ENCODE measurements at regions of chr5 and their contacts with region 1.

Region 1: GRCh38 chr5:54310433-54311175 is at the start of gene ARL15:
- DNase-seq: peak; percentile 96
- ATAC-seq: peak; percentile 96
- H3K4me3 ChIP-seq: peak within 1 kb of the TSS; percentile 73 to 100 (median 88)
- H3K4me3 Mint-ChIP-seq: peak within 1 kb of the TSS; percentile 96
- H3K27ac ChIP-seq: peak within 1 kb of the TSS; percentile 49 to 80
- H3K27ac Mint-ChIP-seq: peak within 1 kb of the TSS; percentile 90
- H3K4me1 ChIP-seq: peaks cover 8 to 20% of the 10 kb centered on the region in 2 donors
- H3K4me1 Mint-ChIP-seq: peaks cover 24% of the 10 kb centered on the region
- H3K27me3 ChIP-seq: peaks cover 0 to 6% (median 3%) of the 10 kb centered on the region in 4 experiments
- H3K27me3 Mint-ChIP-seq: peaks cover 12% of the 10 kb centered on the region
- CTCF ChIP-seq: no peak
- total RNA-seq, gene ARL15: 20.5 and 25.4 TPM in 2 replicates

Region 2: GRCh38 chr5:53560506-53561191 is 750.0 kb before region 1 on chr5 and contains the start of gene NDUFS4:
- CTCF ChIA-PET with region 1: interaction called, 3 read pairs
- POLR2A ChIA-PET with region 1: no interaction called
- intact Hi-C with region 1: loop called (anchors 5 kb)
- DNase-seq: peak; percentile 83
- ATAC-seq: peak; percentile 93
- H3K4me3 ChIP-seq: peak within 1 kb of the TSS; percentile 83 to 93 (median 90)
- H3K4me3 Mint-ChIP-seq: peak within 1 kb of the TSS; percentile 99
- H3K27ac ChIP-seq: peak within 1 kb of the TSS; percentile 71 to 80
- H3K27ac Mint-ChIP-seq: peak within 1 kb of the TSS; percentile 96
- H3K4me1 ChIP-seq: peaks cover 10 to 20% of the 10 kb centered on the region in 2 donors
- H3K4me1 Mint-ChIP-seq: peaks cover 39% of the 10 kb centered on the region
- H3K27me3 ChIP-seq: peaks cover 0 to 10% (median 2%) of the 10 kb centered on the region in 4 experiments
- H3K27me3 Mint-ChIP-seq: peaks cover 28% of the 10 kb centered on the region
- CTCF ChIP-seq: no peak
- total RNA-seq, gene NDUFS4: 23.7 and 24.0 TPM in 2 replicates

Region 3: GRCh38 chr5:53965459-53965858 is 345.1 kb before region 1 on chr5:
- CTCF ChIA-PET with region 1: no interaction called
- POLR2A ChIA-PET with region 1: no interaction called
- intact Hi-C with region 1: no loop called
- DNase-seq: no peak
- ATAC-seq: no peak
- H3K4me3 ChIP-seq: no peak overlapping the region
- H3K4me3 Mint-ChIP-seq: no peak overlapping the region
- H3K27ac ChIP-seq: no peak overlapping the region
- H3K27ac Mint-ChIP-seq: no peak overlapping the region
- H3K4me1 ChIP-seq: no peaks in the 10 kb centered on the region
- H3K4me1 Mint-ChIP-seq: no peaks in the 10 kb centered on the region
- H3K27me3 ChIP-seq: no peaks in the 10 kb centered on the region
- H3K27me3 Mint-ChIP-seq: no peaks in the 10 kb centered on the region
- CTCF ChIP-seq: no peak

Region 4: GRCh38 chr5:54517174-54518092 is 206.8 kb after region 1 on chr5 and contains the start of gene SNX18:
- CTCF ChIA-PET with region 1: interaction called, 4 read pairs
- POLR2A ChIA-PET with region 1: no interaction called
- intact Hi-C with region 1: loop called (anchors 1 kb)
- DNase-seq: peak; percentile 94
- ATAC-seq: peak; percentile 85
- H3K4me3 ChIP-seq: peak within 1 kb of the TSS; percentile 69 to 97 (median 92)
- H3K4me3 Mint-ChIP-seq: peak within 1 kb of the TSS; percentile 92
- H3K27ac ChIP-seq: peak within 1 kb of the TSS; percentile 9 to 70
- H3K27ac Mint-ChIP-seq: peak within 1 kb of the TSS; percentile 84
- H3K4me1 ChIP-seq: peaks cover 30 to 47% of the 10 kb centered on the region in 2 donors
- H3K4me1 Mint-ChIP-seq: peaks cover 45% of the 10 kb centered on the region
- H3K27me3 ChIP-seq: no peaks in the 10 kb centered on the region
- H3K27me3 Mint-ChIP-seq: no peaks in the 10 kb centered on the region
- CTCF ChIP-seq: peak; percentile 90
- total RNA-seq, gene SNX18: 31.6 and 34.2 TPM in 2 replicates

Region 5: DNA sequence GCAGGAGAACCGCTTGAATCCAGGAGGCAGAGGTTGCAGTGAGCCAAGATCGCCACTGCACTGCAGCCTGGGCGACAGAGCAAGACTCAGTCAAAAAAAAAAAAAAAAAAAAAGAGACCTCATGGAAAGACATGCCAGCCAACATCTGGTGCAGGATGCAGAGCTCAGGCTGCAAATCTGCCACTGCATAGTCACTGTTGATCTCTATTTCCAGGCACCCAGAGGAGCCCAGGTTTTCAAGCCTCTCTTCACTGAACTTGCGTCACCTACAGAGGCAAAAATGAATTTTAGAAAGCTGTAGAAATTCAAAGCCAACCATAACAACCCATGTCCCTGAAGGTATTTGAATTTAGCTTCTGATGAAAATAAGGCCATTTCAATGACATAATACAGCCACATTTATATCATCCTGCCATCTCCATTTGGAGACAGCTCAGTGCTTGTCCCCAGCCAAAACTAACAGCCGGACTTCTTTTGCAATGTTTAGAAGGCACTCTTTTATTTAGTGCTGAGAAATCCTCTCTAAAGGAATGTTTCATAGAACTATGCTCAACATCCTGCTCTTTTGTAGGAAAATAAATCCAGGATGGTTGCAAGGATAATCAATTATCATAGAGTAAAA is 320.2 kb after region 1 on chr5:
- CTCF ChIA-PET with region 1: no interaction called
- POLR2A ChIA-PET with region 1: no interaction called
- intact Hi-C with region 1: no loop called
- DNase-seq: no peak
- ATAC-seq: no peak
- H3K4me3 ChIP-seq: no peak overlapping the region
- H3K4me3 Mint-ChIP-seq: no peak overlapping the region
- H3K27ac ChIP-seq: no peak overlapping the region
- H3K27ac Mint-ChIP-seq: no peak overlapping the region
- H3K4me1 ChIP-seq: no peaks in the 10 kb centered on the region
- H3K4me1 Mint-ChIP-seq: peaks cover 16% of the 10 kb centered on the region
- H3K27me3 ChIP-seq: no peaks in the 10 kb centered on the region
- H3K27me3 Mint-ChIP-seq: no peaks in the 10 kb centered on the region
- CTCF ChIP-seq: no peak

Region 6: DNA sequence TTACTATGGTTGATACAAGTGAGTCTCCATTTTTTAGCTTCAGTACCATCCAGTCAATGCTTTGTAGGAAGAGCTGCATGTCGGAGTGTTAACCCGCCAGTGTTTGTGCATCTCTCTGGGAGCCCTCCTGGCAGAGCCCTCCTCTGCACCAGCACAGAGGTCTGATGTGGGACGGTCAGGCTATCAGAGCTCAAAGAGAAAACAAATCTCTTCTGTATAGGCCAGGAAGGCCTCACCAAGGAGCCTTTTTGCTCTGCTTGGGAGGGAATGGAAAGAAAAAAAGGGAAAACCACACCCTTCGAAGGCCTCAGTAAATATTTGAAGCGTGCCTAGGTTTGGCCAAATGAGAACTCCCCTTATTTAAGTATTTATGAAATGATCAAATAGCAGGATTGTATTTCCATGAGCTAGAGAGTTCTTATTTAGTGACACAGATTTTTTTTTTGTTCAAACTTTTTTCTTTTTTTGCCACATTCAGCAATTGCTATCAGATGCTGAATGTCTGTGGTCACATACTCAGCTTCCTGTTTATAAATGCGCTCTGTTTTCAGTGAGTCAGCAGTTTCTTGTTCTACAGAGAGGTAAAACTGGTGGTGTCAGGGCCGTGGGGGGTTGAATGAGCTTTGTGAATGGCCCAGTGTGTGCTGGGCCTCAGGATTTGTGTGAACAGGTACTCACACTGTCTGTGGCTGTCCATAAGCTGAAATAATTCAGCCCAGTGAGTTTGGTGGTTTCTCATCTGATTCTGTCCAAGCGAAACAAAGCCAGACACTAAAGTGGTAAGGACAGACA is 433.6 kb after region 1 on chr5:
- CTCF ChIA-PET with region 1: no interaction called
- POLR2A ChIA-PET with region 1: no interaction called
- intact Hi-C with region 1: loop called (anchors 10 kb)
- DNase-seq: peak; percentile 51
- ATAC-seq: peak; percentile 81
- H3K4me3 ChIP-seq: no peak overlapping the region
- H3K4me3 Mint-ChIP-seq: peak overlapping the region; percentile 68
- H3K27ac ChIP-seq: no peak overlapping the region
- H3K27ac Mint-ChIP-seq: peak overlapping the region; percentile 75
- H3K4me1 ChIP-seq: peaks cover 20 to 26% of the 10 kb centered on the region in 2 donors
- H3K4me1 Mint-ChIP-seq: peaks cover 42% of the 10 kb centered on the region
- H3K27me3 ChIP-seq: peaks cover 0 to 2% (median 0%) of the 10 kb centered on the region in 4 experiments
- H3K27me3 Mint-ChIP-seq: no peaks in the 10 kb centered on the region
- CTCF ChIP-seq: no peak

Region 7: DNA sequence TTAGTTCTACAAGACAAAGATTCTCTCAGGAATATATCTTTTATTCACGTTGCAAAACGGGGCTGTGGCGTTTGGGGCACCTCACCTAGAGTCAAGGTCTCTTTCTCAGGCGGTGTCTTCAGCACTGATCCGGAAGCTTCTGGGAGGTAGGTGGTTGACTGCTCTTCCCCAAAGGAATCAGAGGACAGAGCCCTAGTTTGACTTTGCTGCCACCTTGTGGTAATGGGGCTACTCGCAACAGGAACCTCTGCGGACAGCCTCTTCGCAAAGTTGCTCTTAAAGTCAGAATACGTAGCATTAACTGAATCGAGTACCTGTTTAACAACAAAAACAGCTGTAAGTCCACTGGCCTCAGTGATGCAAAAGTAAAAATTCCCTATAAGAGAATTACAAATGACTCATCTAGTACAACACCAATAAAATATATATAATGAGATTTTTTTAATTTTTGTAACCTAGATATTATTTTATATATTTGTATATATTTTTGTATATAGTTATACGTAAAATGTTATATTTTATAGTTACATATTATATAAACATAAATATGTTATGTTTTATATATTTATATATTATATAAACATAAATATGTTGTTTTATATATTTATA is 836.0 kb after region 1 on chr5:
- CTCF ChIA-PET with region 1: no interaction called
- POLR2A ChIA-PET with region 1: no interaction called
- intact Hi-C with region 1: loop called (anchors 10 kb)
- DNase-seq: peak; percentile 74
- ATAC-seq: peak; percentile 82
- H3K4me3 ChIP-seq: no peak overlapping the region
- H3K4me3 Mint-ChIP-seq: no peak overlapping the region
- H3K27ac ChIP-seq: no peak overlapping the region
- H3K27ac Mint-ChIP-seq: no peak overlapping the region
- H3K4me1 ChIP-seq: peaks cover 4% of the 10 kb centered on the region in 2 donors
- H3K4me1 Mint-ChIP-seq: peaks cover 2% of the 10 kb centered on the region
- H3K27me3 ChIP-seq: peaks cover 0 to 2% (median 0%) of the 10 kb centered on the region in 4 experiments
- H3K27me3 Mint-ChIP-seq: peaks cover 16% of the 10 kb centered on the region
- CTCF ChIP-seq: peak; percentile 97

Region 8: GRCh38 chr5:55534436-55535198 is 1224.0 kb after region 1 on chr5 and contains the start of gene PLPP1:
- CTCF ChIA-PET with region 1: no interaction called
- POLR2A ChIA-PET with region 1: no interaction called
- intact Hi-C with region 1: loop called (anchors 10 kb)
- DNase-seq: peak; percentile 92
- ATAC-seq: peak; percentile 78
- H3K4me3 ChIP-seq: peak within 1 kb of the TSS; percentile 71 to 93 (median 89)
- H3K4me3 Mint-ChIP-seq: peak within 1 kb of the TSS; percentile 98
- H3K27ac ChIP-seq: peak within 1 kb of the TSS; percentile 88 to 92
- H3K27ac Mint-ChIP-seq: peak within 1 kb of the TSS; percentile 96
- H3K4me1 ChIP-seq: peaks cover 18 to 23% of the 10 kb centered on the region in 2 donors
- H3K4me1 Mint-ChIP-seq: peaks cover 24% of the 10 kb centered on the region
- H3K27me3 ChIP-seq: no peaks in the 10 kb centered on the region
- H3K27me3 Mint-ChIP-seq: no peaks in the 10 kb centered on the region
- CTCF ChIP-seq: no peak
- total RNA-seq, gene PLPP1: 8.8 and 11.2 TPM in 2 replicates